Heart left ventricle (tissue), 16 donors: ENCODE measurements at regions of chr3 and their contacts with region 1.

Region 1: GRCh38 chr3:154195620-154196356 is 74.6 kb downstream of the ARHGEF26 start:
- DNase-seq: no peak
- ATAC-seq: no peak
- H3K4me3 ChIP-seq: no peak overlapping the region
- H3K27ac ChIP-seq: no peak overlapping the region
- H3K4me1 ChIP-seq: no peaks in the 10 kb centered on the region
- H3K27me3 ChIP-seq: no peaks in the 10 kb centered on the region
- CTCF ChIP-seq: no peak
- POLR2A ChIP-seq: no peak

Region 2: DNA sequence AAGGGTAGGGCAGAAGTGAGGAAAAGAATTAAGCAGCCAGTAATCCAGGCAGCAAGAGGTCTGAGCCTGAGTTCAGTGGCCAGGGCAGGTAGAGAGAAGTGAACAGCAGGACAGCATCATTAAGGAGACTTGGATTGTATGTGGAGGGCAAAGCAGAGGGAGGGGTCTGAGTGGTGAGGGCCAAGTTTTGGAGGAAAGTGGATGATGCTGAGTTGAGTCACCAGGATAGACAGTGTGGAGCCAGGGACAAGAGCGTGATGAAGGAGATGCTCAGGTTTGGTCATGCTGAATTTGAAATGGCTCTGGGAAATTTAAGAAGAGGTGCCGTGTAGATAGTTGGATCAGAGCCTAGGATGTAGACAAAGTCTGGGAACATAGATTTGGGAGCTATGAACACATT is 18.5 kb after region 1 on chr3:
- intact Hi-C with region 1: loop called in 1 of 10 experiments (anchors 2 kb)
- DNase-seq: no peak
- ATAC-seq: no peak
- H3K4me3 ChIP-seq: no peak overlapping the region
- H3K27ac ChIP-seq: no peak overlapping the region
- H3K4me1 ChIP-seq: no peaks in the 10 kb centered on the region
- H3K27me3 ChIP-seq: no peaks in the 10 kb centered on the region
- CTCF ChIP-seq: no peak
- POLR2A ChIP-seq: no peak

Region 3: GRCh38 chr3:154384479-154384878 is 188.7 kb after region 1 on chr3:
- intact Hi-C with region 1: no loop called
- DNase-seq: no peak
- ATAC-seq: no peak
- H3K4me3 ChIP-seq: no peak overlapping the region
- H3K27ac ChIP-seq: no peak overlapping the region
- H3K4me1 ChIP-seq: no peaks in the 10 kb centered on the region
- H3K27me3 ChIP-seq: no peaks in the 10 kb centered on the region
- CTCF ChIP-seq: no peak
- POLR2A ChIP-seq: no peak